ENCODE measurements at regions of chr1 and their contacts with region 1.

Region 1: DNA sequence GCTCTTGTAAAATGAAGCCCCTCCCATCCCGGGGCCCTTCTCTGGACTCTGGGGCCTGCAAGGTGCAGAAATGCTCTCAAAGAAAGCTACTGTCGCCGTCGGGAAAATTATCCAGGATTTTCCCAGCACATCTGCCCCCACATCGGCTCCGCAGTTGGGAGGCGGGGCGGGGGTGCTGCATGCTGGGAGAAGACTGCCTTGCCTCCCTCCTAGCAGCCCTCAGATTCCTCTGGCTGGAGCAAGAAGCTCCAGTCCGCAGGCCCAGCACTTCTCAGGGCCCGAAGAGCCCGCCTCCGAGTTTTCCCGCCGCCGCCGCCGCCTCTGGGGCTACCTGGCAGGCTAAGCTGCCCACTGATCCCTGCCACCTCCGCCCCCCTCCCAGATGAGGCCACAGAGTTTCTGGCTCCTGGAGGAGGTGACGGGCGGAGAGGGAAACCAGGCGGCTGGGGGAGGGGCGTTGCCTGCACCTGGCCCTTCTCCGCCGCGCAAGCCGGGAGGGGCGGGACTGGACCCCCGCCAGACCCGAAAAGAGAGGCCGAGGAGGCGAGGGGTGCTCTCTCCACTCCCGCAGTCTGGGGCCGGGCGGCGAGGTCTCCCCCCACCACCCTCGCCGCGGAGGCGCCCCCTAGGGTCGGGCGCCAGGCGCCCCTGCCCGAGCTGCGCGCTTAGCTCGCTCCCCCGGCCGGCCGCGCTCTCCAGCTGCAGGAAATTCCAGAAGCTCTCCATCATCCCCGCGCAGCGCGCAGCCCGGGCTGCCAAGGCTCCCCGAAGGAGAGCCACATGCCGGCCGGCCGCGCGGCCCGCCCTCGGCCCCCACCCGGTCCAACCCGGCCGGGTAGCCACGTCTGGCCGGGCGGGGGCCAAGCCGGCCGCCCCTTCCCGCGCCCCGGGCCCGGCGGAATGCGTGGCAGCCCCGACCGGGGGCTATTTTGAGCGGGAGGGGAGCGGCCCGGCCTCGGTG is 28.8 kb downstream of the AHDC1 start:
- DNase-seq: no peak

Region 2: DNA sequence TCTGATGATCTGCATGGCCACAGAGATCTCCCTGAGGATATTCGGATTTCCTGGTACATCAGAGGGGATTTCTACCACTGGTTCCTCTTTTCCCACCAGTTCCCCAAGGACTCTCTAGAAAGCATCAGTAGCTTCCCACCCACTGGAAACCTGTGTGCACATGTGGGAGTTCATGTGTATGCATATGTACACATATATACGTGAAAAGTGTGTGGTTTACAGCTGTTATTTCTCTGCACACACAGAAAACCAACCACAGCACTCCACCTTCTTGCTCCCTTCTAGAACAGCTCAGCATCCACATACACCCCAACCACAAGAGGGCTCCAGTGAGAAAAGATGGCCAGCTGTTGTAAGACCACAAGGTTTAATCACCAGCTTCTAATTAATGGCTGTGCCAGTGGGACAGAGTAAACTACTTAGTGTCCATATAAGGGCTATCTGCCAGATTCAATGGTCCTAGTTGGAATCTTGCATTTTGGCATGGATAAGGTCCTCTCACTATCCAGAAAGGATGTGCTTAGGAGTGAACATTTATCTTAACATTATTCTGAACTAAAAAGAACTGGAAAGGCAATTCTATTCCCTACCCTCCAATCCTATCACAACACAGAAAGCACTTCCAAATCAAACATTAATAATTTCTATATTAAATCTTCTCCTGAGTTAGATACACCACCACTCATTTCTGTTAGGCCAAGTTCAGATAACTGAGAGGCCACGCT is 158.6 kb before region 1 on chr1:
- in situ Hi-C with region 1: loop called (anchors 25 kb)
- DNase-seq: peak; percentile 55

Measured in G401 (cell line).